Activated CD4-positive, alpha-beta T cell treated with anti-CD3 and anti-CD28 coated beads, Interleukin-2, amount 10 ng/mL, durations not matched to agents 7 days and 5 days (primary cell): ENCODE measurements at regions of chr16 and their contacts with region 1.

Region 1: GRCh38 chr16:29848420-29849297 is 14.4 kb downstream of the CDIPT start:
- DNase-seq: peak; percentile 87
- H3K4me3 Mint-ChIP-seq: no peak overlapping the region
- H3K27ac Mint-ChIP-seq: peak overlapping the region; percentile 19
- H3K4me1 Mint-ChIP-seq: peaks cover 10% of the 10 kb centered on the region
- H3K27me3 Mint-ChIP-seq: no peaks in the 10 kb centered on the region

Region 2: DNA sequence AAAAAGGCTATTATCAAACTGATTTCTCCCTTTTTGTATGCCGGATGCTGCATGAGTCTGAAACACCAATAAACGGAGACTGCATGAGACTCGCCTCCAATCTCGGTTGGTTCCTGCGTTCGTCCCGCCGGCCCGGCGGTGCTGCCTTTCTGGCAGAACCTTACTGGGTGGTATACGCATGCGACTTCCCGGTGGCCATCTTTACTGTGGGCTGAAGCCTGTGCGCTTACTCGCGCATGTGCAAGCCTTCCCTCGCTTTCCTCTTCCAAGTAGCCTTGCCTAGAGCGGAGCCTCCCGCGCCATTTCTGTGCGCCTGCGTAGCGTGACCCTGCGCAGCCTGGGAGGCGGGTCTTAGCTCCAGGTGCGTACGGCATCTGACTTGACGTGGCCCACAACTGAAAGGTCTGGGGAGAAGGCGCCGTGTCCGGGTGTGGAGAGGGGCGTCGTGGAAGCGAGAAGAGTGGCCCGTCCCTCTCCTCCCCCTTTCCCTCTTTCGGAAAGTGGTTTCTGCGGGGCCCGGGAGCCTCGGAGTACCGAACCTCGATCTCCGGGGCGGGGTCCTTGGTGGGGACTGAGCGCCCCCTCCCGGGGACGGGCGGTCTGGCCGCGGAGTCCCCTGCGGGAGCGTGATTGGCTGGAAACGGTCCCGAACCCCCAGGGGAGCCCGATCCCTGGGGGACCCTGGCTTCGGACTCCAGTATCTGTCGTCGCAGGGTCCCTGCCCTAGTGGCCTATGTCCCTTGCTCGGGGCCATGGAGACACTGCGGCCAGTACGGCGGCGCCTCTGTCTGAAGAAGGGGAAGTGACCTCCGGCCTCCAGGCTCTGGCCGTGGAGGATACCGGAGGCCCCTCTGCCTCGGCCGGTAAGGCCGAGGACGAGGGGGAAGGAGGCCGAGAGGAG is 32.6 kb before region 1 on chr16 and contains the start of gene PAGR1:
- CTCF ChIA-PET with region 1: interaction called, 41 read pairs
- POLR2A ChIA-PET with region 1: interaction called, 8 read pairs
- DNase-seq: peak; percentile 99
- H3K4me3 Mint-ChIP-seq: peak within 1 kb of the TSS; percentile 91
- H3K27ac Mint-ChIP-seq: peak within 1 kb of the TSS; percentile 96
- H3K4me1 Mint-ChIP-seq: peaks cover 71% of the 10 kb centered on the region
- H3K27me3 Mint-ChIP-seq: peaks cover 13% of the 10 kb centered on the region
- total RNA-seq, gene PAGR1: 26.8 to 29.6 TPM

Region 3: GRCh38 chr16:29825145-29826044 is 23.3 kb before region 1 on chr16:
- CTCF ChIA-PET with region 1: interaction called, 41 read pairs
- POLR2A ChIA-PET with region 1: no interaction called
- DNase-seq: peak; percentile 63
- H3K4me3 Mint-ChIP-seq: peak overlapping the region; percentile 26
- H3K27ac Mint-ChIP-seq: peak overlapping the region; percentile 74
- H3K4me1 Mint-ChIP-seq: peaks cover 70% of the 10 kb centered on the region
- H3K27me3 Mint-ChIP-seq: no peaks in the 10 kb centered on the region